ENCODE measurements at regions of chr15 and their contacts with region 1.

Region 1: DNA sequence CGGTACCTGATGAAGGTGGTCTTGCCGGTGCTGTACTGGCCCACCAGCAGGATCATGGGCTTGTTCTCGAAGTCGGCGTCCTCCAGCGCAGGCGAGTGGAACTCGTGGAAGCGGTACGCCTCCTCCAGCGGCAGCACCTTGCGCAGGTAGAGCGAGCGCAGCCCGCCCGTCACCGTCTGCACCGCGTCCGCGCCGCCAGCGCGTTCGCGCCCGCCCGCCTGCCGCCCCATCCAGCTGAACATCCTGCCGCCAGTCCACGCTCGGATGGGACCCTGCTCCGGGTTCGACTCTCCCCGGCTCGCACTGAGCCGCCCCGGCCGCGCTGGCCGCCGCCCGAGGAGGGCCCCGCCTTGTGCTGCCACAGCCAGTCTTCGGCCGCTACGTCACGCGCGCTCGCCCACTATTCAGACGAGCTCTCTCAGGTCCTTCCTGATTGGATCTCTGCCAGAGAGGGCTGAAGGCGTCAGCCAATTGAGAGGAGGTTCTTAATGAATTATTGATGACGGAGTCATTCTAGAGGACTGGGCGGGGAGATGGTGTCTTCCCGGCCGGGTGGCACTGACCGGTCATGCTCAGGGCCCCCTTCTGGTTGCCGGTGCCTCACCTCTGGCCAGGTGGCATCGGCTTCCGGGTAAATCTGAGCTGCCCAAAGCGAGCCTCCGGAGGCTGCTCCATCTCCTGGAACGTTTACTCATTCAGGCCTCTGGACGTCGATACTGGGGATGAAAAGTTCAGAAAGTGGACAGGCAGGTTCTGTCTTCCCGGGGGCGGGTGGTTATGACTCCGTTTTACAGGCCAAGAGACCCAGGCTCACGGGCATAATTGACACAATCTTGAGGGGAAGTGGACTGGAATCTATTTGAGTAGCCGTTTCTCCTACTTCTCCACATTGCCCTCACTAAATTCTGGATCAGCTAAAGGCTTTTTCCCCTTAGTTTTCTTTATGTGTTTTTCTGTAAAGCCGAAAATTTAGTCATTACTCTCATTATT is at the start of gene EHD4:
- DNase-seq: peak; percentile 94 to 97 (median 95)
- H3K4me3 ChIP-seq: peak within 1 kb of the TSS; percentile 76 to 79
- H3K4me3 Mint-ChIP-seq: peak within 1 kb of the TSS; percentile 92 to 97 (median 94)
- H3K27ac ChIP-seq: peak within 1 kb of the TSS; percentile 87
- H3K27ac Mint-ChIP-seq: peak within 1 kb of the TSS; percentile 85 to 98 (median 97)
- H3K4me1 ChIP-seq: peaks cover 49% of the 10 kb centered on the region
- H3K4me1 Mint-ChIP-seq: peaks cover 31 to 53% (median 40%) of the 10 kb centered on the region in 4 donors
- H3K27me3 ChIP-seq: no peaks in the 10 kb centered on the region
- H3K27me3 Mint-ChIP-seq: peaks cover 5% of the 10 kb centered on the region in 2 donors
- total RNA-seq, gene EHD4: 15.2 to 15.6 TPM

Region 2: GRCh38 chr15:41827880-41828806 is 144.4 kb before region 1 on chr15 and contains the start of gene JMJD7:
- CTCF ChIA-PET with region 1: no interaction called
- POLR2A ChIA-PET with region 1: interaction called, 3 read pairs
- intact Hi-C with region 1: loop called (anchors 2 kb)
- DNase-seq: peak; percentile 88 to 92 (median 89)
- H3K4me3 ChIP-seq: peak within 1 kb of the TSS; percentile 94 to 95
- H3K4me3 Mint-ChIP-seq: peak within 1 kb of the TSS; percentile 91 to 99 (median 94)
- H3K27ac ChIP-seq: peak within 1 kb of the TSS; percentile 74
- H3K27ac Mint-ChIP-seq: peak within 1 kb of the TSS; percentile 83 to 98 (median 95)
- H3K4me1 ChIP-seq: peaks cover 48% of the 10 kb centered on the region
- H3K4me1 Mint-ChIP-seq: peaks cover 30 to 54% (median 43%) of the 10 kb centered on the region in 4 donors
- H3K27me3 ChIP-seq: no peaks in the 10 kb centered on the region
- H3K27me3 Mint-ChIP-seq: no peaks in the 10 kb centered on the region
- total RNA-seq, gene JMJD7: 75.0 to 78.5 TPM

Region 3: GRCh38 chr15:41930221-41930866 is 42.2 kb before region 1 on chr15:
- CTCF ChIA-PET with region 1: interaction called, 71 read pairs
- POLR2A ChIA-PET with region 1: interaction called, 245 read pairs
- intact Hi-C with region 1: no loop called
- DNase-seq: no peak
- H3K4me3 ChIP-seq: no peak overlapping the region
- H3K4me3 Mint-ChIP-seq: no peak overlapping the region
- H3K27ac ChIP-seq: no peak overlapping the region
- H3K27ac Mint-ChIP-seq: peak overlapping the region in 3 of 7 donors; percentile 32 to 78 (median 42)
- H3K4me1 ChIP-seq: peaks cover 48% of the 10 kb centered on the region
- H3K4me1 Mint-ChIP-seq: peaks cover 23 to 52% (median 44%) of the 10 kb centered on the region in 4 donors
- H3K27me3 ChIP-seq: no peaks in the 10 kb centered on the region
- H3K27me3 Mint-ChIP-seq: no peaks in the 10 kb centered on the region

Region 4: DNA sequence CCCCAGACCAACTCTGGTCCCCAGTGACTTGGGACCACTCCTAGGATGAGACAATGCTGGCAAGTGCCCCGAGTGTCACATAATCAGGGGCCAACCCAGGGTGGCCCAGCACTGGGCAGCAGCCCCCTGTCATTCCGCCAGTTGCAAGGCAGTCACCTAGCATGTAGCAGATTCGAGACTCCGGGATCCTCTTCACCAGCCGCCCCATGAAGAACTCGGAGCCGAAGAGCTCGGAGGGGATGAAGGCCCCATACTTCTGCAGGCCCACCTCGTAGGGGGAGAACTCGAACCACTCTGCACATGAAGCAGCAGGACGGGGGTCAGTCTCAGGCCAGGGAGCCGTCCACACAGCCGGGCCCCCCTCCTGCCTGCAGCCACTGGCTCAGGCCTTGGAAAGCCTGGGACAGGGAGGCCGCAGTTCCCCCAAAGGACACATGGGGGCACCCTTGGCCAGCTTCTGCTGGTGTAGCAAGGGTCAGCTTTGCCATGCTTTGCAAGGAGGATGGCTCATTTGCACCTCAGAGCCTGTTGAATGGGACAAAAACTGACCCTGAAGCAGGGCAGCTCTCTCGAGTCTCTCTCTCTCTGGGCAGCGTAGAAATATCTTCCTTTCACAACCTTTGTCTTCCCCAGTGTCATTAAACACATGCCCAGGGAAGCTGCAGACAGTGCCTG is 16.8 kb after region 1 on chr15:
- CTCF ChIA-PET with region 1: interaction called, 24 read pairs
- POLR2A ChIA-PET with region 1: interaction called, 3 read pairs
- intact Hi-C with region 1: no loop called
- DNase-seq: peak; percentile 70 to 78 (median 72)
- H3K4me3 ChIP-seq: no peak overlapping the region
- H3K4me3 Mint-ChIP-seq: no peak overlapping the region
- H3K27ac ChIP-seq: no peak overlapping the region
- H3K27ac Mint-ChIP-seq: peak overlapping the region in 1 of 7 donors; percentile 52
- H3K4me1 ChIP-seq: no peaks in the 10 kb centered on the region
- H3K4me1 Mint-ChIP-seq: no peaks in the 10 kb centered on the region
- H3K27me3 ChIP-seq: no peaks in the 10 kb centered on the region
- H3K27me3 Mint-ChIP-seq: no peaks in the 10 kb centered on the region

Region 5: GRCh38 chr15:42157981-42158765 is 185.6 kb after region 1 on chr15:
- CTCF ChIA-PET with region 1: no interaction called
- POLR2A ChIA-PET with region 1: no interaction called
- intact Hi-C with region 1: no loop called
- DNase-seq: no peak
- H3K4me3 ChIP-seq: no peak overlapping the region
- H3K4me3 Mint-ChIP-seq: no peak overlapping the region
- H3K27ac ChIP-seq: no peak overlapping the region
- H3K27ac Mint-ChIP-seq: peak overlapping the region in 2 of 7 donors; percentile 6 to 48
- H3K4me1 ChIP-seq: no peaks in the 10 kb centered on the region
- H3K4me1 Mint-ChIP-seq: peaks cover 0 to 1% (median 0%) of the 10 kb centered on the region in 4 donors
- H3K27me3 ChIP-seq: no peaks in the 10 kb centered on the region
- H3K27me3 Mint-ChIP-seq: no peaks in the 10 kb centered on the region